Gastrocnemius medialis (tissue), 4 donors: ENCODE measurements at regions of chr4 and their contacts with region 1.

Region 1: GRCh38 chr4:124712372-124713184 is at the start of gene ANKRD50:
- DNase-seq: peak; percentile 71 to 76
- ATAC-seq: peak; percentile 81 to 82
- H3K4me3 ChIP-seq: peak within 1 kb of the TSS; percentile 76 to 98 (median 92)
- H3K27ac ChIP-seq: peak within 1 kb of the TSS; percentile 89 to 95 (median 94)
- H3K4me1 ChIP-seq: peaks cover 27 to 32% of the 10 kb centered on the region in 2 donors
- H3K27me3 ChIP-seq: no peaks in the 10 kb centered on the region
- CTCF ChIP-seq: no peak
- POLR2A ChIP-seq: peak; percentile 44 to 77
- total RNA-seq, gene ANKRD50: 2.5 to 4.2 (median 3.3) TPM

Region 2: DNA sequence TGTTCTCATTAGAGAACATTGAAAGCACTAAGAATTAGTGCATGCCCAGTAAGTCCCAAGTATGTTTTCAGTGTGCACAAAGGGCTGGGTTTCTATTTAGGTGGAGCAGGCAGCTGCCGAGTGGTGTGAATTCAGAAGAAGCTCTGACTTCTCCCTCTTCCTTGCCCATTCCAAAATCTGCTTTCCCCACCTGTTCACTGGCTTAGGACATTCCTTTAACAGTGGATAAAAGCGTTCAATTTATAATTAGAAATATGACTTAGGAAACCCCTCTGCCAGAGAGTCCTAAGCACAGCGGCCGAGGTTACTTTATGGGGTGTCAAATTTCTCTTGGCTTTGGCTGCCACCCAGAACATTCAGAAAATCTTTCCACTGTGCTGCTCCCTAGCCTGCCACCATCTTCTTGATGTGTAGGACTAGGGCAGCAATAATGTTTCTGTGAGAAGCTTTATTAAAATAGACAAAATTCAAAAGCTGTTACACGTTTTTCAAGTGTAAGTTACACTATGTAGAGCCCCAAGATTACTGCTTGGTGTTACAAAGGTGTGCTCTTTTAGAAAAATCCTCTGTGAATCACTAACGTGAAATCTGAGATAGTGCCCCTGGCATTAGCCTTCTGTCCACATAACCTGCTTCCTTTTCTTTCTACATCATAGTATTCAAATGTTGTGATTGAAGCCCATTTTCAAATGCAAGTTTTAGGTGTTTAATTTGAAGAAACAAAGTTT is 191.6 kb after region 1 on chr4:
- in situ Hi-C with region 1: no loop called
- intact Hi-C with region 1: loop called (anchors 2 kb)
- DNase-seq: peak; percentile 47 to 78
- ATAC-seq: peak; percentile 97 to 98
- H3K4me3 ChIP-seq: peak overlapping the region in 3 of 4 donors; percentile 8 to 19 (median 16)
- H3K27ac ChIP-seq: peak overlapping the region; percentile 33 to 76 (median 52)
- H3K4me1 ChIP-seq: peaks cover 30 to 32% of the 10 kb centered on the region in 2 donors
- H3K27me3 ChIP-seq: no peaks in the 10 kb centered on the region
- CTCF ChIP-seq: no peak
- POLR2A ChIP-seq: no peak

Region 3: DNA sequence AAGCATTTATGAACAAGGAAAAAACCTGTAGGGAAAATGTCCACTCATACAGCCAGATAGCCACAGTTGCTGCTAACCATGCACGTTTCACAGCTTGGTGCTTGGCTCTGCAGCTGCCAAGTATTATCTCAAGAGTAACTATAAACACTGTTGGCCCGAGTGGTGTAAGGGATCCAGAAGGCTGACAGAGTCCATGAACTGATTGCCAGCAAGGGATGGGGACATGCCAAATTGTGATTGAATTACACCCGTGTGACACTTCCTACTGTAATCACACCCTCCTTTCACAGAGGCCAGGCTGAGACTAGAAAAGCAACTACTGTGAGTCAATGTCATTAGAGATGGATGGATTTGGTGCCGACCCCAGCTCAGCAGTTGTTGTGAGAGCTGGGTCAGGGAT is 223.8 kb after region 1 on chr4:
- in situ Hi-C with region 1: no loop called
- intact Hi-C with region 1: loop called (anchors 10 kb)
- DNase-seq: peak; percentile 85 to 90
- ATAC-seq: peak; percentile 99
- H3K4me3 ChIP-seq: no peak overlapping the region
- H3K27ac ChIP-seq: peak overlapping the region; percentile 23 to 73 (median 61)
- H3K4me1 ChIP-seq: peaks cover 37 to 39% of the 10 kb centered on the region in 2 donors
- H3K27me3 ChIP-seq: no peaks in the 10 kb centered on the region
- CTCF ChIP-seq: no peak
- POLR2A ChIP-seq: no peak